Panc1 (cell line): ENCODE measurements at regions of chr18 and their contacts with region 1.

Region 1: DNA sequence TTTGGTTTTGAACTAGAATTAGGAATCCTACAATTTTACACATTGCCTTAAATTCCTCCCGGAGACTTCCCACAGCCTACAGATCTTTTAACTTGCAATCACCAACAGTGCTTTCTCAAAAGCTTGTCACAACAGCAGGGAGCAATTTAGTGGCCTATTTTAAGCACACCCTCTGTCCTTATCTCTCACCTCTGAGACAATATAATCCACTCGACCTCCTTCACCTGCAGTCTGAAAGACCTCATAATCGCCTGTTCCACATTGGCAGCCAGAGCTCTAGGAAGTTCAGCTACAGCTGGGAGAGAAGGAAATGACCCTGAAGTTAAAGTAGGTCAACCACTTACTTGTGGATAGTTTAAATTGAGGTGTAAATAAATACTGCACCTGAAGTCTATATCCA is 249.7 kb upstream of the DLGAP1 start:
- DNase-seq: no peak
- ATAC-seq: no peak
- H3K4me3 ChIP-seq: no peak overlapping the region
- H3K27ac ChIP-seq: no peak overlapping the region
- H3K4me1 ChIP-seq: no peaks in the 10 kb centered on the region
- H3K27me3 ChIP-seq: no peaks in the 10 kb centered on the region
- CTCF ChIP-seq: no peak

Region 2: GRCh38 chr18:4720518-4720917 is 15.7 kb after region 1 on chr18:
- CTCF ChIA-PET with region 1: no interaction called
- POLR2A ChIA-PET with region 1: no interaction called
- in situ Hi-C with region 1: no loop called
- intact Hi-C with region 1: loop called (anchors 2 kb)
- DNase-seq: no peak
- ATAC-seq: no peak
- H3K4me3 ChIP-seq: no peak overlapping the region
- H3K27ac ChIP-seq: no peak overlapping the region
- H3K4me1 ChIP-seq: no peaks in the 10 kb centered on the region
- H3K27me3 ChIP-seq: no peaks in the 10 kb centered on the region
- CTCF ChIP-seq: no peak

Region 3: GRCh38 chr18:4854671-4855070 is 149.9 kb after region 1 on chr18:
- CTCF ChIA-PET with region 1: no interaction called
- POLR2A ChIA-PET with region 1: no interaction called
- in situ Hi-C with region 1: no loop called
- intact Hi-C with region 1: no loop called
- DNase-seq: no peak
- ATAC-seq: no peak
- H3K4me3 ChIP-seq: no peak overlapping the region
- H3K27ac ChIP-seq: no peak overlapping the region
- H3K4me1 ChIP-seq: no peaks in the 10 kb centered on the region
- H3K27me3 ChIP-seq: no peaks in the 10 kb centered on the region
- CTCF ChIP-seq: no peak